Activated B cell treated with CpG ODN at 0.5 μM for 24 hours (primary cell): ENCODE measurements at regions of chr13 and their contacts with region 1.

Region 1: DNA sequence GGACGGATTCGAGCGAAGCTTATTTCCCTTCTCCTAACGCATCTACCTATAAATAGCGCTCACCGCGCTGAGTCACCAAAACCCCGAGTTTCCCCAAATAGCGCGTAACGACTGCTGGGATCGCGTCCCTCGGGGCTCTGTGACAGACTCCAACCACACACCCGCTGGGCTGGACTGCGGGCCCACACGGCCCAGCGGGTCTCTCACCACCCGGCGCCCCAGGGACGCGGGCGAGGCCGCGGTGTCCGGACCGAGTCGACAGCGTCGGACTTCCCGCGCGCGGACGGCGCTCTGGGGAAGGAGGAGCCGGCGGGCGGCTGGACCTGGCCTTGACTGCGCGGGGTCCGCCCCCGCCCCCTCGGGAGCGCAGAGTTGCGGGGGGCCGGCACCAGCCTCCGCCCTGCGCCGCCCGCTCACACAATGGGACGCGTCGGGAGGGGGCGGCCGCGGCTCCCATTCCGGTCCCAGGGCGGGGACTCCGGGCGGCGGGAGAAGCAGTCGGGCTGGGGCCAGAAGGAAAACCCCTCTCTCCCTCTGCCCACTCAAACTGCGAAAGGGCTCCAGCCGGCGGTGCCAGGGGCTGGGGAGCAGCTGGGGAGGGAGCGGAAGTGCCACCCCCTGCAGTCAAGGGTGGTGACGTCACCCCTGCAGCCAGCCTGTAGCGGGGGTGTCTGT is 108.8 kb downstream of the KCNRG start:
- DNase-seq: peak; percentile 86
- ATAC-seq: peak; percentile 59
- H3K4me3 Mint-ChIP-seq: peak overlapping the region; percentile 87
- H3K27ac Mint-ChIP-seq: peak overlapping the region; percentile 95
- H3K4me1 Mint-ChIP-seq: peaks cover 64% of the 10 kb centered on the region
- H3K27me3 Mint-ChIP-seq: peaks cover 2% of the 10 kb centered on the region
- CTCF ChIP-seq: no peak

Region 2: GRCh38 chr13:49530457-49530856 is 593.5 kb before region 1 on chr13:
- CTCF ChIA-PET with region 1: no interaction called
- POLR2A ChIA-PET with region 1: no interaction called
- intact Hi-C with region 1: loop called (anchors 10 kb)
- DNase-seq: peak; percentile 30
- ATAC-seq: peak; percentile 88
- H3K4me3 Mint-ChIP-seq: peak overlapping the region; percentile 67
- H3K27ac Mint-ChIP-seq: peak overlapping the region; percentile 89
- H3K4me1 Mint-ChIP-seq: peaks cover 73% of the 10 kb centered on the region
- H3K27me3 Mint-ChIP-seq: no peaks in the 10 kb centered on the region
- CTCF ChIP-seq: no peak

Region 3: DNA sequence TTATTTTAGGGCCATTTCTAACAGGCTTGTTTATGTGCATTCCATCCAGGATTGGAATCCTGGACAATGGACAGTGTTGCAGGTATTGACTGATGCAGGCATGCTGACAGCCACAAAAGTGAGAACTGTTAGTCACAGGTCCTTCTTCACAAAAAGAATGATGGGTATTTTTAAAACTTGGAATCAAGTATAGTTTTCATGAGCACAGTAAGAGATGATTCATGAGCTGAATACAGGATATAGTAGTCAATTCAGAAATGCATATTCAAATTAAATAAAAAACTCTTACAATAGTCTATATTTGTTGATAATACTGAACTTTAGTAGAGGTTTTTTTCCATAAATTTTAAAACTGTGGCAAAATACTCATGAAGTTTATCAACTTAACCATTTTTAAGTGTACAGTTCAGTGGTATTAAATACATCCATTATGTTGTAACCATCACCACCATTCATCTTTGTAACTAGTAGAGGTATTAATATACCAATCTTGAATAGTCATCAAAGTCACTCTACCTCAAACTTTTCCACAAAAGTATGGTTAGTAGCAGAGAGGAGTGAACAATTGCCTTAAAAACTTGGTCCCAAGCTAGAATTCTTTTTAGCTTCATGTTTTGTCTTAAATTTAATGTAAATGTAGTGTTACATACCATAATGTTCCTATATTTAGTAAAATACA is 29.2 kb before region 1 on chr13:
- CTCF ChIA-PET with region 1: interaction called, 3 read pairs
- POLR2A ChIA-PET with region 1: interaction called, 1,044 read pairs
- intact Hi-C with region 1: no loop called
- DNase-seq: no peak
- ATAC-seq: no peak
- H3K4me3 Mint-ChIP-seq: no peak overlapping the region
- H3K27ac Mint-ChIP-seq: no peak overlapping the region
- H3K4me1 Mint-ChIP-seq: peaks cover 32% of the 10 kb centered on the region
- H3K27me3 Mint-ChIP-seq: no peaks in the 10 kb centered on the region
- CTCF ChIP-seq: no peak

Region 4: GRCh38 chr13:50222569-50223332 is 98.8 kb after region 1 on chr13:
- CTCF ChIA-PET with region 1: no interaction called
- POLR2A ChIA-PET with region 1: interaction called, 65 read pairs
- intact Hi-C with region 1: no loop called
- DNase-seq: no peak
- ATAC-seq: peak; percentile 31
- H3K4me3 Mint-ChIP-seq: no peak overlapping the region
- H3K27ac Mint-ChIP-seq: peak overlapping the region; percentile 10
- H3K4me1 Mint-ChIP-seq: peaks cover 34% of the 10 kb centered on the region
- H3K27me3 Mint-ChIP-seq: no peaks in the 10 kb centered on the region
- CTCF ChIP-seq: no peak

Region 5: GRCh38 chr13:50319635-50320255 is 195.7 kb after region 1 on chr13:
- CTCF ChIA-PET with region 1: no interaction called
- POLR2A ChIA-PET with region 1: no interaction called
- intact Hi-C with region 1: no loop called
- DNase-seq: no peak
- ATAC-seq: no peak
- H3K4me3 Mint-ChIP-seq: no peak overlapping the region
- H3K27ac Mint-ChIP-seq: no peak overlapping the region
- H3K4me1 Mint-ChIP-seq: peaks cover 12% of the 10 kb centered on the region
- H3K27me3 Mint-ChIP-seq: no peaks in the 10 kb centered on the region
- CTCF ChIP-seq: no peak

Region 6: DNA sequence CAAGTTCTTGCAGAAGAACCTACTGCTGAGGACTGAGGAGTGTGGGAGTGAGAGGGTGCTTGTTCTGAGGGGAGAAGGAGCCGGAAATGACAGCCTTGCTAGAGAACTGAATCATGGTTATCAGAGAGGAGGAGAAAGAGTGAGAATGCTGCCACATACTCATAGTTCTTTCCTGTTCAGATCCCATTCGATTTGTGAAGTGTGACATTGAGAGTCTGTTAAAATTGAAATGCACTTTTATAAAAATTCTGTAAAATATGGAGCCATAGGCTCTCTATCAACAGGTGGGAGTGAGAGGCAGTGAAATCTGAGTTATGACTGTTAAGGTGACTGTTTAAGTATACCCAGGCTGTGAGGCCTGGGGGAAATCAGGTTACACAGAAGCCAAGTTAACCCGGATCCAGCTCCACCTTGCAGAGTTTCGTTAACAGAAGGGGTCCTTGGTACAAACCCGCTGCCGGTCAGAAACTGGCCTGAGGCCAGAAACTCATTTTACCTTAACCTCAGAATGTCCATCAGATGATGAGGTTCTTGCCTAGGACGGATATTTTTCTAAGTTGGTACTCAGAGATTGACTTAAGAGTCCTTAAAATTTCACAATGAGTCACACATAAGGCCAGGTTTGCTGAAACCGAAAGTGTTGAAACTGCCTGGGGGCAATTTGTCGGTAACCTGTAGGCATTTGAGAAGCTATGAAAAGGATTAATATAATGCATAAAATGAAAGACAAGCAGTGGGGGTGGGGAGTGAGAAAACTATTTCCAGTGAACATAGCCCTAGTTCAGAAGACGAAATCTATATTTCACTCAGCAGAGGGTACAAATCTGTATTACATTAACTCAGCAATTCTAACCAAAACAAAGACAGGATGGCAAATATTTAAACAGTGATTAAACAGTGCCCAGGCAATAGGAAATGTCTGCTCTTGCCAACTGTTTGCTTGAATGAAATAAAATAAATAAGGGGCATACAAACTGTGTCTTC is 241.7 kb after region 1 on chr13:
- CTCF ChIA-PET with region 1: interaction called, 3 read pairs
- POLR2A ChIA-PET with region 1: interaction called, 92 read pairs
- intact Hi-C with region 1: no loop called
- DNase-seq: no peak
- ATAC-seq: peak; percentile 28
- H3K4me3 Mint-ChIP-seq: peak overlapping the region; percentile 63
- H3K27ac Mint-ChIP-seq: peak overlapping the region; percentile 86
- H3K4me1 Mint-ChIP-seq: peaks cover 57% of the 10 kb centered on the region
- H3K27me3 Mint-ChIP-seq: no peaks in the 10 kb centered on the region
- CTCF ChIP-seq: no peak

Region 7: GRCh38 chr13:50635504-50635903 is 511.5 kb after region 1 on chr13:
- CTCF ChIA-PET with region 1: no interaction called
- POLR2A ChIA-PET with region 1: interaction called, 13 read pairs
- intact Hi-C with region 1: loop called (anchors 1 kb)
- DNase-seq: no peak
- ATAC-seq: peak; percentile 75
- H3K4me3 Mint-ChIP-seq: peak overlapping the region; percentile 61
- H3K27ac Mint-ChIP-seq: peak overlapping the region; percentile 96
- H3K4me1 Mint-ChIP-seq: peaks cover 42% of the 10 kb centered on the region
- H3K27me3 Mint-ChIP-seq: no peaks in the 10 kb centered on the region
- CTCF ChIP-seq: no peak